Spleen (tissue), 13 donors: ENCODE measurements at regions of chr17 and their contacts with region 1.

Region 1: DNA sequence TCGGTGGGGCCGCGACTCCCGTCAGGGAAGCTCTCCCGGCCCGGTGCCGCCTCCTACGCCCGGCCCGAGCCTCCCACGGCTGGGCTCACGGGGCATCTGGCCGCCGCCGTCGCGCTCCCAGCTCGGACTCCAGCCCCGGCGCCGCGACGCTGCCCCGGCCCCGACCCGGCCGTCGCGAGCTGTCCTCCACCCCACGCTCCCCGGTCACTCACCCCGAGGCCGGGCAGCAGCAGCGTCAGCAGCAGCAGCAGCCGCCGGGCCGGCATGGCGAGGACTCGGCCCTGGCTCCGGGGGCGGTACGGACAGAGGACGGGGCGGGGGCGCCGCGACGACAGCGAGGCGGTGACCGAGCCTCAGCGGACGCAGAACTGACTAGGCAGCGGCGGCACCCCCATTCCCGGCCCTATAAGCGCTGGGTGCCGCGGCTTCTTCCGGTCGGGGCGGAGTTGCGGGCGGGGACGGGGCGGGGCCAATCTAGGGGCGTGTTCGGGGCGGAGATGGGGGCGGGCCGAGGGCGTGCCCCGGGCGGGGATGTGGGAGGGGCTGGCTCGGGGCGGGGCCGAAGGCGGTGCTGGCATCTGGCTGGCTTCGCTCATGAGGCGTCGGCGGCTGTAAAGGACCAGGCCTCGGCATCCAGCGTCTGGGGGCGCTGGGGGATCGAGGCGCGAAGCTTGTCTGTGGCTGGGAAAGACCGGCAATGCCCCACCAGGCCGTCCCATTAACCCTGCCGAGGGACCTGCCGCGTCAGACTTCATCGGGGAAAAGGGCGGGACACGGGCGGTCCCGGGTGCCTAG is at the start of gene ERN1:
- DNase-seq: peak; percentile 99
- H3K4me3 ChIP-seq: peak within 1 kb of the TSS; percentile 60 to 92 (median 72)
- H3K27ac ChIP-seq: peak within 1 kb of the TSS; percentile 95 to 99 (median 97)
- H3K4me1 ChIP-seq: peaks cover 18 to 78% (median 52%) of the 10 kb centered on the region in 6 donors
- H3K27me3 ChIP-seq: no peaks in the 10 kb centered on the region
- CTCF ChIP-seq: peak in 2 of 11 experiments; percentile 6 to 31
- POLR2A ChIP-seq: peak; percentile 67 to 87 (median 87)
- total RNA-seq, gene ERN1: 34.5 to 65.4 (median 47.2) TPM

Region 2: DNA sequence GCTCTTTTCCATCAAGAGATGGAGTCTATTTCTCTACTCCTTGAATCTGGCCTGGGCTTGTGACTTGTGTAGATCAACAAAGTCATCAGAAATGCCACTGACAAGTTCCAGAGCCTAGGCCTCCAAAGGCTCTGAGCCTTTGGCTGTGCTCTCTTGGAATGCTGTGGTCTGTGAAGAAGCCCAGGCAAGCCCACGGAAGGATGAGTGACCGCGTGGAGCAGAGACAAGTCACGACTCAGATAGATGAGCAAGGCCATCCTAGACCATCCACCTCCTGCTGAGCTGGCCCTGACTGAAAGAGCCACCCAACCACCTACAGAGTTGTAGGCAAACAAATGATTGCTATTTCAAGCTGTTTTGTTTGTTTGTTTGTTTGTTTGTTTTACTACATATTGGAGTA is 97.9 kb before region 1 on chr17:
- intact Hi-C with region 1: loop called (anchors 5 kb)
- DNase-seq: no peak
- H3K4me3 ChIP-seq: no peak overlapping the region
- H3K27ac ChIP-seq: no peak overlapping the region
- H3K4me1 ChIP-seq: peaks cover 0 to 21% (median 4%) of the 10 kb centered on the region in 6 donors
- H3K27me3 ChIP-seq: no peaks in the 10 kb centered on the region
- CTCF ChIP-seq: no peak
- POLR2A ChIP-seq: no peak